ENCODE measurements at regions of chr2 and their contacts with region 1.

Region 1: DNA sequence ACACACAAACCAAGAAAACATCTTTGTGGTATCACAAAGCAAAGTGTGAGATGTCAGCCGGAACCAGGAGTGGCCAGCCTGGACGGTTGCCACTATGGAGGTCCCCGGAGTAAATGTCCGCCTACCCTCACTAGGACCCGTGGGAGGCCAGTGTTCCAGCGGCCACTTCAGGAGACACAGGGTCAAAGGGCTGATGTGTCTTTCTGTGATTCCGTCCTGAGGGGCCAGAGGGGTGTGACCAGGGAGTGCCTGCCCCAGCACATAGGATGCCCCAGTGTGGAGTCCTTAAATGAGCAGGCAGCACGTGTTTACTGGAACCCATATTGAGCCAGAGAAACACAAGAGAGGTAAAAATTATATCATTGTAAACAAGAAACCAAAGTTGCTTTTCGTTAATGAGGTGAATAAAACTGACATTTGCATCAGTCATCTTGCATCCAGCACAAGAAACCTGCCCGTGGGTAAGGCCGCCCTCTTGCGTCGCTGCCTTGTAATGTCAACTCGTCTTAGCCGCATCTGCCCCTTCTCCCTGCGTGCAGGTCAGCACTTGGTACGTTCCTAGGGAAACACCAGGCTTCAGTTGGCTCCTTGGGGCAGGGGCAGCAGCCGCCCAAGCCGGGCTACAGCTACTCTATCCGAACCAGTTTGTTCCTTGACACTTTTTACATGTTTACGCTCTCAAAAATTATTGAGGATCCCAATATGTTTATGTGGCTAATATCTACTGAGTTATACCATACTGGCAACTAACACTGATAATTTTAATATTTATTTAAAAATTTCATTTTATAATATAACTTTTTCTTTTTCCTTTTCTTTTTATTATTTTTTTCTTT is 46.7 kb upstream of the LAPTM4A start:
- DNase-seq: peak; percentile 94
- H3K4me3 ChIP-seq: no peak overlapping the region
- H3K27ac ChIP-seq: no peak overlapping the region
- H3K4me1 ChIP-seq: peaks cover 0 to 16% of the 10 kb centered on the region in 2 experiments; a peak in 1 of 4 replicates
- H3K27me3 ChIP-seq: no peaks in the 10 kb centered on the region
- CTCF ChIP-seq: peak; percentile 99
- EP300 ChIP-seq: 0 out of 4 replicates have a peak, but pooled peaks of 1 of the 2 experiments have one; percentile 13
- RAD21 ChIP-seq: peak; percentile 100

Region 2: GRCh38 chr2:19879120-19879519 is 219.0 kb before region 1 on chr2:
- CTCF ChIA-PET with region 1: no interaction called
- POLR2A ChIA-PET with region 1: no interaction called
- DNase-seq: no peak
- H3K4me3 ChIP-seq: no peak overlapping the region
- H3K27ac ChIP-seq: no peak overlapping the region
- H3K4me1 ChIP-seq: no peaks in the 10 kb centered on the region
- H3K27me3 ChIP-seq: peaks cover 5% of the 10 kb centered on the region; the same call in 1 of the 2 replicates
- CTCF ChIP-seq: no peak
- EP300 ChIP-seq: no peak
- RAD21 ChIP-seq: no peak

Region 3: GRCh38 chr2:19955544-19956422 is 142.3 kb before region 1 on chr2:
- CTCF ChIA-PET with region 1: interaction called, 43 read pairs
- POLR2A ChIA-PET with region 1: no interaction called
- DNase-seq: peak; percentile 81
- H3K4me3 ChIP-seq: no peak overlapping the region
- H3K27ac ChIP-seq: peak overlapping the region in 1 of 2 experiments; percentile 22; a peak in 1 of 4 replicates
- H3K4me1 ChIP-seq: peaks cover 0 to 11% of the 10 kb centered on the region in 2 experiments; a peak in 2 of 4 replicates
- H3K27me3 ChIP-seq: no peaks in the 10 kb centered on the region
- CTCF ChIP-seq: peak; percentile 97
- EP300 ChIP-seq: no peak
- RAD21 ChIP-seq: peak; percentile 98

Region 4: GRCh38 chr2:20021405-20022009 is 76.6 kb before region 1 on chr2:
- CTCF ChIA-PET with region 1: interaction called, 233 read pairs
- POLR2A ChIA-PET with region 1: no interaction called
- DNase-seq: no peak
- H3K4me3 ChIP-seq: no peak overlapping the region
- H3K27ac ChIP-seq: no peak overlapping the region
- H3K4me1 ChIP-seq: no peaks in the 10 kb centered on the region; a peak in 1 of 4 replicates
- H3K27me3 ChIP-seq: no peaks in the 10 kb centered on the region
- CTCF ChIP-seq: no peak
- EP300 ChIP-seq: no peak
- RAD21 ChIP-seq: no peak

Region 5: GRCh38 chr2:20035955-20036666 is 62.0 kb before region 1 on chr2:
- CTCF ChIA-PET with region 1: interaction called, 11 read pairs
- POLR2A ChIA-PET with region 1: no interaction called
- DNase-seq: no peak
- H3K4me3 ChIP-seq: no peak overlapping the region
- H3K27ac ChIP-seq: no peak overlapping the region
- H3K4me1 ChIP-seq: peaks cover 0 to 3% of the 10 kb centered on the region in 2 experiments; a peak in 1 of 4 replicates
- H3K27me3 ChIP-seq: no peaks in the 10 kb centered on the region
- CTCF ChIP-seq: no peak
- EP300 ChIP-seq: no peak
- RAD21 ChIP-seq: no peak

Region 6: GRCh38 chr2:20051532-20052228 is 46.4 kb before region 1 on chr2 and contains the start of gene LAPTM4A:
- CTCF ChIA-PET with region 1: interaction called, 13 read pairs
- POLR2A ChIA-PET with region 1: interaction called, 4 read pairs
- DNase-seq: peak; percentile 98
- H3K4me3 ChIP-seq: peak within 1 kb of the TSS; percentile 72 to 99
- H3K27ac ChIP-seq: peak within 1 kb of the TSS; percentile 98 to 100
- H3K4me1 ChIP-seq: peaks cover 11 to 30% of the 10 kb centered on the region in 2 experiments; a peak in 3 of 4 replicates
- H3K27me3 ChIP-seq: no peaks in the 10 kb centered on the region
- CTCF ChIP-seq: no peak
- EP300 ChIP-seq: no peak; a peak in 1 of 4 replicates
- RAD21 ChIP-seq: peak; percentile 17; the same call in 1 of the 2 replicates
- polyA plus RNA-seq, gene LAPTM4A: 306 and 350 TPM in 2 replicates

Region 7: GRCh38 chr2:20077466-20077865 is 20.6 kb before region 1 on chr2:
- CTCF ChIA-PET with region 1: interaction called, 13 read pairs
- POLR2A ChIA-PET with region 1: interaction called, 4 read pairs
- DNase-seq: no peak
- H3K4me3 ChIP-seq: no peak overlapping the region
- H3K27ac ChIP-seq: no peak overlapping the region
- H3K4me1 ChIP-seq: peaks cover 2 to 27% of the 10 kb centered on the region in 2 experiments
- H3K27me3 ChIP-seq: no peaks in the 10 kb centered on the region
- CTCF ChIP-seq: no peak
- EP300 ChIP-seq: no peak
- RAD21 ChIP-seq: no peak

Measured in SK-N-SH (cell line).